ENCODE measurements at regions of chr6 and their contacts with region 1.

Region 1: DNA sequence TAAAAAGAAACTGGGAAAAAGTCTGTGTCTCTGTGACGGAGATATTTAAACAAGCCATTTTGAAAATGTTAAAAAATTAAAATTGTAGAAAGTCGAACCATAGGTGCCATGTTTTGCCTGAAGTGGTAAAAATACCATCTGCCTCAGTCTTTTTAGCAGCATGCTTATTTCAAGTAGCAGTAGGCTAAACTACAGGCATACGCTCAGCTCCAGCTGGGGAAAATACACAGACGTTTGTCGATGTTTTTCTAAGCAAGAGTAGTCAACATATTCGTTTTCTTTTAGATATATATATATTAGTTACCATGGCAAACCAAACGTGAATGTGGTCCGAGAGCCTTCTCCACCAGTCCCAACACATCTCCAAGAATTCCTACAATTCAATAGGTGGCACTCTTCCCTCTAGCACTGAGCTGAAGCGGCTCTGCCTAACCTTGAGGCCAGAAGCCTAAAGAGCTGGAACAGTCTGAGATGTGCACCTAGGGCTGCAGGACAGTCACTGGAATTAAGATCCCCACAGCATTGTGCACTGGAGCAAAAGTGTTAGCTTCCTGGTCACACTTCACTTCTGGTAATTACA is 70.2 kb upstream of the BEND3 start:
- DNase-seq: no peak
- ATAC-seq: peak in 3 of 4 donors; percentile 74 to 81 (median 78)
- H3K4me3 ChIP-seq: no peak overlapping the region
- H3K27ac ChIP-seq: no peak overlapping the region
- H3K4me1 ChIP-seq: no peaks in the 10 kb centered on the region
- H3K27me3 ChIP-seq: no peaks in the 10 kb centered on the region
- CTCF ChIP-seq: no peak

Region 2: GRCh38 chr6:107600936-107601335 is 415.5 kb after region 1 on chr6:
- intact Hi-C with region 1: no loop called
- DNase-seq: peak in 4 of 6 donors; percentile 13 to 40 (median 20)
- ATAC-seq: peak; percentile 64 to 83 (median 74)
- H3K4me3 ChIP-seq: no peak overlapping the region
- H3K27ac ChIP-seq: no peak overlapping the region
- H3K4me1 ChIP-seq: peaks cover 0 to 4% (median 0%) of the 10 kb centered on the region in 3 donors
- H3K27me3 ChIP-seq: no peaks in the 10 kb centered on the region
- CTCF ChIP-seq: no peak

Region 3: DNA sequence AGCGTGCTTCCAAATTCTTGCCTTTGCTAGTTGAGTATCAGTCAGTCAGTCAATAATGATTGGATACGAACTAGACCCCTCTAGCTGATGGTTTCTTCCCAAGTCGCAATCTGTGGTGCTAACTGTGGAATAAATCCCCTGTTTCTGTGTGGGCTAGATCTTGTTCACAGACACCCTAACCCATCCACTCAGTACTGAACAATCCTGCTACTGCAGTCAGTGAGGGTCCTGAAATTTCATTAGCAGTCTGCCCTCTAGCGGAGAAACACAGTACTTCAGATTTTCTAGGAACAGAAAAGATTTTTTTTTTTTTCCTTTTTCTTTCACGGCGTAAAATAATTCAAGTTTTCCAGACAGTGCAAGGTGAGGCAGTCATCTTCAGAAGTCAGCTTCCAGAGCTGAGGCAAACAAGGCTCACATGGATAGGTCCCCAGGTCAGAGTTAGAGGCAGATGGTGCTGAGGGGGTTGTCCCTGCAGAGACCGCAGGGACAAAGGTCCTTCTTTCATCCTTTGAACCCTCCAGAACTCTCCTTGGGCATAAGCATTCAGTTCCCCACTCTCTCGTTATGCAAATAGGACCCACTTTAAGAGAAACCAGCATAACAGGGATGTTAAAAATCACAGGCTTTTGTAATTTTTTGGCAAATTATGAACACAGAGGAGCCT is 519.0 kb after region 1 on chr6:
- intact Hi-C with region 1: loop called in 1 of 3 experiments (anchors 10 kb)
- DNase-seq: no peak
- ATAC-seq: peak in 3 of 4 donors; percentile 60 to 74 (median 71)
- H3K4me3 ChIP-seq: no peak overlapping the region
- H3K27ac ChIP-seq: no peak overlapping the region
- H3K4me1 ChIP-seq: no peaks in the 10 kb centered on the region
- H3K27me3 ChIP-seq: no peaks in the 10 kb centered on the region
- CTCF ChIP-seq: peak; percentile 61 to 75 (median 71)

Measured in pancreas (tissue), 10 donors.